Ovary (tissue), 10 donors: ENCODE measurements at regions of chr7 and their contacts with region 1.

Region 1: GRCh38 chr7:143901668-143902331 is at the start of gene TCAF1:
- DNase-seq: peak; percentile 97 to 98 (median 97)
- H3K4me3 ChIP-seq: peak within 1 kb of the TSS; percentile 89
- H3K27ac ChIP-seq: peak within 1 kb of the TSS; percentile 72 to 88
- H3K4me1 ChIP-seq: peaks cover 11% of the 10 kb centered on the region
- H3K27me3 ChIP-seq: no peaks in the 10 kb centered on the region
- CTCF ChIP-seq: peak in 1 of 3 donors; percentile 23
- EP300 ChIP-seq: no peak
- POLR2A ChIP-seq: peak; percentile 80
- total RNA-seq, gene TCAF1: 40.1 to 92.7 (median 63.2) TPM

Region 2: DNA sequence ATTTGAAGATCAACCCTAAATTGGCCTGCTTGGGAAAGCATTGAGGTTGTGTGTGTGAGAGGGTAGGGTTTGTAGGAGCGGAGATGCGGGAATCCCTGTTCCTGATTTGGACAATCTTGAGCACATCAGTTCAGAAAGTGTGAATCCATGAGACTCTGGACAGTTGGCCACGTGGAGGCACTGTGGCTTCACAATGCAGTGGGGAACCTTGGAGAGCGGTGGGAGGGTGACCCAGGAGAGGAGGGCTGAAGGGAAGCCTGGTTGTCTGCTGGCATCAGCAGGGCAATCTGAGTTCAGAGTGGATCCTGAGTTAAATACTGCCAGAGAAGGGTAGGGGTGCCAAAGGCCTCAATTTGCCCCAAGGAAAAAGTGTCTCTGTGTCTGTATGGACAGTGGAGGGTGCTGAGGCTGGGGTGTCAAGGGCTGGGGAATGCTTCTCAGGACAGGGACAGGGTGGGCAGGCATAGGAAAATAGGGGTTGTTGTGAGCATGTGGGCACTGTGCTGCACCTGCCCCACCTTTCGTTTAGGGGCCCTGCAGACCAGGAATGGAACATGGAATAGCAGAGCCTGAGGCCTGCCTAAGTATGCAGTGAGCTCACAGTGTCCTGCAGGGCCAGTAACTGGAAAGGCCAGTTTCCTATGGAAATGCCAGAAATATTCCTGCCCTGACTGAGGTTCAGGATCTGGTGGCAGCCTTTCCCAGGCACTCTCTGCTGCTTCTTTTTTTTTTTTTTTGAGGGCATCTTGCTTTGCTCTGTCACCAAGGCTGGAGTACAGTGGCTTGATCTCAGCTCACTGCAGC is 1481.0 kb before region 1 on chr7:
- intact Hi-C with region 1: no loop called
- DNase-seq: no peak
- H3K4me3 ChIP-seq: no peak overlapping the region
- H3K27ac ChIP-seq: no peak overlapping the region
- H3K4me1 ChIP-seq: no peaks in the 10 kb centered on the region
- H3K27me3 ChIP-seq: no peaks in the 10 kb centered on the region
- CTCF ChIP-seq: no peak
- EP300 ChIP-seq: no peak
- POLR2A ChIP-seq: no peak

Region 3: DNA sequence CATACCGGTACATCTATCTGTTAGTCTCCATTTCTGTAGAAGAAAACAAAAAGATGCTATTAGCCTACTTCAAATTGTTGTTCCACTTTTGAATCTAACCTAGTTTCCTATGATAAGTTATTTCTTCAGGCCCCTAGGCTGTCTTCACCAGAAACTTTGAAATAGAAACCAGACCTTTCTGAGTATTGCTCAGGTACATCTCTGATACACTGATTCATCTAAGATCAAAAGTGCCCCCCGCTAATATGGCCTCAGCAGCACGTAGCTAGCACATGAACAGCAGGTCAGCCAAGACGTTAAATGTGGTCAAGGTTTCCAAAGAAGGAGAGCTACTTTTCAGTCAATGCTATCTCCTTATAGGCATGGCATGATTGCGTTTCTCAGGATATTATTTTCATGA is 167.9 kb before region 1 on chr7:
- intact Hi-C with region 1: no loop called
- DNase-seq: no peak
- H3K4me3 ChIP-seq: no peak overlapping the region
- H3K27ac ChIP-seq: no peak overlapping the region
- H3K4me1 ChIP-seq: no peaks in the 10 kb centered on the region
- H3K27me3 ChIP-seq: no peaks in the 10 kb centered on the region
- CTCF ChIP-seq: no peak
- EP300 ChIP-seq: no peak
- POLR2A ChIP-seq: no peak

Region 4: DNA sequence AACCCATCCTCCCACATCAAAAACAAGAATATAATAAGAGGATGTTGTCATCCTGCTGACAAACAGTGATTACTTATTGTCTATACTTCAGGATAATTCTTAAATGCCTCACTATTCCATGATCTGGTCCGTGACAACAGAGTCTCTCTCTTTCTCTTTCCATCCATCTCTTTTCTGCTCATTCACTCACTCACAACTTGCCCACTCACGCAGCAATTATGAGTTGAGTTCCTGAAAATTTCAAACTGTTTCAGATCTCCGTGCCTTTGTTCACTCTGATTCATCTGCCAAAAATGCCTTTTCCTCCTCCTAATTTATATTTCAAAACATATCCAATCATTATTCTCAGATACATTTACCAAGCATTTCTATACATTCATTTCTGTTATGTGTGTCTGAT is 99.7 kb after region 1 on chr7:
- intact Hi-C with region 1: loop called in 1 of 4 experiments (anchors 10 kb)
- DNase-seq: no peak
- H3K4me3 ChIP-seq: no peak overlapping the region
- H3K27ac ChIP-seq: no peak overlapping the region
- H3K4me1 ChIP-seq: no peaks in the 10 kb centered on the region
- H3K27me3 ChIP-seq: no peaks in the 10 kb centered on the region
- CTCF ChIP-seq: no peak
- EP300 ChIP-seq: no peak
- POLR2A ChIP-seq: no peak

Region 5: GRCh38 chr7:144519925-144520324 is 618.1 kb after region 1 on chr7:
- intact Hi-C with region 1: no loop called
- DNase-seq: no peak
- H3K4me3 ChIP-seq: no peak overlapping the region
- H3K27ac ChIP-seq: no peak overlapping the region
- H3K4me1 ChIP-seq: no peaks in the 10 kb centered on the region
- H3K27me3 ChIP-seq: no peaks in the 10 kb centered on the region
- CTCF ChIP-seq: no peak
- EP300 ChIP-seq: no peak
- POLR2A ChIP-seq: no peak